Panc1 (cell line): ENCODE measurements at regions of chr9 and their contacts with region 1.

Region 1: DNA sequence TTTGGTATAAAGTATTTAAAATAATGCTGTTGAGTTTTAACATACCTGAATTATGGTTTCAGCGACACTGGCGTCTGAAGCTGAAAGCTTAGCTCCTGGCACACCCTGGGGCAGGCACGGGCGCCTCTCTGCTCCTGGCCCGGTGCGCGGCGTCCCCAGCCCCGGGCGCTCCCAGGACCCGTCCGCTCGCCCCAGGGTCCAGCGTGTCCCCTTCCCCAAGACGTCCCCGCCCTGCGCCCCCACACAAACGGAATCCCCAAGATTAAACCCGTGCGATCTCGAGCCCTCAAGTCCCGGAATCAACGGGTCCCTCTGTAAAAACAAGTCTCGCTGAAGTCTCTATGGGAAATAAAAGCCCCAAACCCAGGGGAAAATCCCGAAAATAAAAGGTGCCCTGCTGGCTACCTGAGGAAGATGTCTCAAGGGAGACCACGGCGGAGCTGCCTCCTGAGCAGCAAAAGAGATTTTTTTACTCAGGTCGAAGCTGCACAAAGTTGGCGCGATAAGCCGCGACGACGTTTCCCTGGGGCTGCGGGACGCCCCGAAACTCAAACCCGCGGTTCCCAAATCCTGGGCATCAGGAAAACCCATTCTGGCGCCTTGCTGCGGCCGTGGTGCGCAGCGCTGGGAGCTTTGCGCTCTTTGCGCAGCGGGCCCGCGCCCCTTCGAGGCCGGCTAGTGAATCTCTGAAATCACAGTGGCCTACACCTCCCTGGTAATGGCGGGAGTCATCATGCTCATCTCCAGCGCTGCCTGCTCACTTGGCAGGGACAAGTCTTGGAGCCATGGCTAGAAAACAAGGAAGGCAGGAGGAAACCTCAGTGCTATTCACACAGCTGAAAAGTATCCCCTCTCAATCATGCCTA is 6.3 kb upstream of the IFNA8 start:
- DNase-seq: no peak
- ATAC-seq: peak; percentile 84
- H3K4me3 ChIP-seq: peak overlapping the region; percentile 40 to 59
- H3K27ac ChIP-seq: no peak overlapping the region
- H3K4me1 ChIP-seq: no peaks in the 10 kb centered on the region
- H3K27me3 ChIP-seq: no peaks in the 10 kb centered on the region
- CTCF ChIP-seq: no peak

Region 2: DNA sequence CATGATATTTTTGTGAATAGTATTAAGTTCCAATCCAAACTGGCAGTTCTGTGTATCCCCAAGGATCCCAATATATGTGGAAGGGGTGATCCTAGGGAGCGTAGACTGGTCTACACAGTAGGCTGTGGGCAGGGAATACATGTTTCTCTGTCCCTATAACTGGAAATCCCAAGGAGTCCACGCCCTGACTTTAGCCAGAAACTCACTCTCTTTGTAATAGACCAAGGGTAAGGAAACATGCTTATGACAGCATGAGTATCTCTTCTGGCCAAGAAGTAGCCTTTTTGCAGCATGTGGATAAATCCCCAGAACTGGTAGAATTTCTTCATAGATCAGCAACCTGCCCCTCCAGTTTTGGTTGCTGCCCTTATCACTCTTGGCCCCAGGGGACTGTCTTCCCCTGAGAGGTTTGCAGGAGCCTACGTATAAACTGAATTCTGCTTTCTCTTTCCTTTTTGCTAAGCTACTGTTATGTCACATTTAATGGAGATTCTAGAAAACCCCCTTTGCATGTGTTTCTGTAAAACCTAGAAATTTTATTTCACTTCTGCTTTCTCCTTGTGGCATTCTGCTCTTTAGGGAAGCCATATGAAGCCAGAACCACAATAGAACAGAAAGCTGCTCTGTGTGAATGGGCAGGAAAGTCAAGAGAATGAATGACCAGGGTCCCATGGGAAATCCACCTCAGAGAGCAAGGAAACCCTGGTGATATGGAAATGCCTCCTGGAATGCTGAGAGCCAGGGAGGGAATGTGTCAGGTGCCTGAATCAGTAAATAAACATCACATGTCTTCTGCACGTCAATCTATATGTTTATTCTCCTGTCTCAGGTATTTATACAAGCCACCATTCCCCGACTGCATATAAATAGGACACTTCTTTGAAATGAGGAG is 20.9 kb before region 1 on chr9:
- CTCF ChIA-PET with region 1: no interaction called
- POLR2A ChIA-PET with region 1: no interaction called
- in situ Hi-C with region 1: no loop called
- intact Hi-C with region 1: loop called (anchors 2 kb)
- DNase-seq: no peak
- ATAC-seq: peak; percentile 30
- H3K4me3 ChIP-seq: no peak overlapping the region
- H3K27ac ChIP-seq: no peak overlapping the region
- H3K4me1 ChIP-seq: no peaks in the 10 kb centered on the region
- H3K27me3 ChIP-seq: no peaks in the 10 kb centered on the region
- CTCF ChIP-seq: no peak